T-cell (primary cell): ENCODE measurements at regions of chr12 and their contacts with region 1.

Region 1: DNA sequence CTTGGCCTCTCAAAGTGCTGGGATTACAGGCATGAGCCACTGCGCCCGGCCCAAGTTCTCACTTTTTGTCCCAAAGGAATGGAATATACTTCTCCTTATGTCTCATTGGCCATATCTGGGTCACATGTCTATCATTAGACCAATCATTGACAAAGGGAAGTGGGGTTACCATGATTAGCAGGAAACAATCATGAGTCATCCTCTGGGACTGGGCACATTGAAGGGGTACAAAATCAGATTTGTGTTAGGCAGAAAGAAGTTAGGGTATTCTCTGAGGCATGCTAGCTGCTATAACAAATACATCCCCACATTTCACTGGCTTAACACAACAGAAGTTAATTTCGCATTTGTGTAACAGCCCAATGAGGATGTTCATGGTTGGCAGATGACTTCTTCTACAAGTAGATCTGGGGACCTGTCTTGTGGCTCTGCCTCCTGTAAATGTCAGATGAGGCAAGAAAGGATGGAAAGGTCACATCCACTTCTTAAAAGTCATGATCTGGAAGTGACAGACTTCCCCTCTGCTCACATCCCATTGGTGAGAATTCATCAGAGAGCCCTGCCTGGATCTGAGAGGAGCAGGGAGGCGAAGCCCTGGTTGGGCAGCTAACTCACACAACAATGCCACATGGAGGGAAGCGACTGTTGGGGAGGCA is 3.1 kb downstream of the CCDC63 start:
- DNase-seq: no peak
- ATAC-seq: no peak
- H3K4me3 ChIP-seq: no peak overlapping the region
- H3K4me3 Mint-ChIP-seq: no peak overlapping the region
- H3K27ac ChIP-seq: no peak overlapping the region
- H3K27ac Mint-ChIP-seq: no peak overlapping the region
- H3K4me1 ChIP-seq: peaks cover 0 to 9% of the 10 kb centered on the region in 2 experiments
- H3K4me1 Mint-ChIP-seq: peaks cover 0 to 6% (median 3%) of the 10 kb centered on the region in 3 donors
- H3K27me3 ChIP-seq: peaks cover 0 to 46% of the 10 kb centered on the region in 2 experiments
- H3K27me3 Mint-ChIP-seq: peaks cover 30 to 56% of the 10 kb centered on the region in 2 donors

Region 2: DNA sequence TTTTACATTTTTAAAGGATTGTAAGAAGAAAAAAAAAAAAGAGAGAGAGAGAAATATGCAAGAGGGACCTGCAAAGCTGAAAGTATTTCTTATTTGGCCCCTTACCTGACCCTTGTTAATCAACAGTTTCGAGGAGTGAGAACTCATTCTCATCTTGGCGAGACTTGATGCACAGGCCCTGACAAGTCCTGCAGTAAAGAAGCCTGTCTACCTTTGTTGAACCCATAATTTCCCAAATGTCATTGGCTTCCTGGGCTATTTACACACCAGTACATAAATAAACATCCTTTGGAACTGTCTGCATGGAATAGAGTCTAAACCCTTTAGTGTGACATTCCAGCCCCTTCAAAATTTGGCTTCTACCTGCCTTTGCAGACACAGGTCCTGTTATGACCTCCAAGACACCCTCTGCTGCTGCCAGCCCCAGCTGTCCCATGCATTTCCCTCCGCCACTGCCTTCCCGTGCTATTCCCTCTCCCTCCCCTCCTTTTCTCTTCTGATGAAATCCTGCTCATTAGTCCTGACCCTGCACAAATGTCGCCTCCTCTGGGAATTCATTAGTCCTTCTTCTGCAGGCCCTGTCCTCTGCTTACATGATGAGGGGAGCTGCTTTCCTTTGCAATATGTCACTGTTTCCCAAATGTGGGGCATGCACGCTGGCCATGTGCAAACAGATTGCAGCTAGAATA is 35.4 kb after region 1 on chr12:
- CTCF ChIA-PET with region 1: no interaction called
- POLR2A ChIA-PET with region 1: no interaction called
- DNase-seq: no peak
- ATAC-seq: no peak
- H3K4me3 ChIP-seq: no peak overlapping the region
- H3K4me3 Mint-ChIP-seq: no peak overlapping the region
- H3K27ac ChIP-seq: no peak overlapping the region
- H3K27ac Mint-ChIP-seq: no peak overlapping the region
- H3K4me1 ChIP-seq: peaks cover 0 to 13% of the 10 kb centered on the region in 2 experiments
- H3K4me1 Mint-ChIP-seq: peaks cover 5 to 8% (median 6%) of the 10 kb centered on the region in 3 donors
- H3K27me3 ChIP-seq: peaks cover 0 to 5% of the 10 kb centered on the region in 2 experiments
- H3K27me3 Mint-ChIP-seq: no peaks in the 10 kb centered on the region

Region 3: DNA sequence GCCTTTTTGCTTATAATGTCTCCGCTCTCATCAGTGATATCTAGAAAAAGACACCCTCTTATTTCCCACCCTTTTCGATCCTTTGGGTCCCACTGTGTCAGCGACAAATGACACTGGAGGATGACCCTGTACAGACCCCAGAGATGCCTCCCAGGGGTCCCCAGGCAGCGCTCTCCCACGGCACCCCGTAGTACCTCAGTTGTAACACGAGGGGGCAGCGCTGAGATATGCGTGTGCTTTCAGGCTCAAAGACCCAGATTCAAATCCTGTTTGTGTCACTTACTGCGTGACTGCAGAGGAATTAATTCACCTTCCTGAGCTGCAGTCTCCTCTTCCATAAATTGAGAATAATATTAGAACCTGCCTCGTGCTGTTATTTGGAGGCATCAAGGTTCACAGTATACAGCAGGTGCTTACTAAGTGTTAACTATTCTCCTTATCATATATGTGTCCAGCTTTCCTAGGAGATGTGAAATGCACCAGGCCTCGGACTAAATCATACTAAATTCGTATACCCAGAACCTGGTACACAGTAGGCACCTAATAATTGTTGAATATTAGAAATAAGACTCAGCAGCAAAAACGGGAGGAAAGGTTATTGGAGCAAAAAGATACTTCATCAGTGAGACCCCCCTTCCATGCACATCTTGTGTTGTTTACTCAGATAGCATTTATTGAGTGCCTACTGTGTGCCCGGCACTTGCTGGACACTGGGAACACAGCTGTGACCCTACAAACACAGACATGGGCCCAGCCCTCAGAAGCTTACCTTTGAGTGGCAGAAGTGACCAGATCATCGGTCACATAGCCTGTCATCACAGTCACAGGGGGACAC is 419.1 kb after region 1 on chr12:
- CTCF ChIA-PET with region 1: interaction called in 1 of 2 experiments, 13 read pairs
- POLR2A ChIA-PET with region 1: no interaction called
- DNase-seq: peak in 5 of 35 experiments; percentile 2 to 30 (median 3)
- ATAC-seq: no peak
- H3K4me3 ChIP-seq: no peak overlapping the region
- H3K4me3 Mint-ChIP-seq: no peak overlapping the region
- H3K27ac ChIP-seq: no peak overlapping the region
- H3K27ac Mint-ChIP-seq: no peak overlapping the region
- H3K4me1 ChIP-seq: no peaks in the 10 kb centered on the region
- H3K4me1 Mint-ChIP-seq: peaks cover 0 to 7% (median 0%) of the 10 kb centered on the region in 3 donors
- H3K27me3 ChIP-seq: peaks cover 0 to 12% of the 10 kb centered on the region in 2 experiments
- H3K27me3 Mint-ChIP-seq: peaks cover 5 to 16% of the 10 kb centered on the region in 2 donors